BJ (cell line): ENCODE measurements at regions of chr3 and their contacts with region 1.

Region 1: GRCh38 chr3:59641169-59641899 is 591.5 kb upstream of the CFAP20DC start:
- DNase-seq: no peak
- H3K4me3 ChIP-seq: no peak overlapping the region
- H3K27me3 ChIP-seq: 0 out of 2 replicates have a peak, but pooled peaks cover 1% of the 10 kb centered on the region
- CTCF ChIP-seq: no peak

Region 2: GRCh38 chr3:59559721-59560435 is 81.5 kb before region 1 on chr3:
- CTCF ChIA-PET with region 1: no interaction called
- POLR2A ChIA-PET with region 1: no interaction called
- DNase-seq: peak; percentile 70
- H3K4me3 ChIP-seq: no peak overlapping the region
- H3K27me3 ChIP-seq: no peaks in the 10 kb centered on the region
- CTCF ChIP-seq: no peak

Region 3: DNA sequence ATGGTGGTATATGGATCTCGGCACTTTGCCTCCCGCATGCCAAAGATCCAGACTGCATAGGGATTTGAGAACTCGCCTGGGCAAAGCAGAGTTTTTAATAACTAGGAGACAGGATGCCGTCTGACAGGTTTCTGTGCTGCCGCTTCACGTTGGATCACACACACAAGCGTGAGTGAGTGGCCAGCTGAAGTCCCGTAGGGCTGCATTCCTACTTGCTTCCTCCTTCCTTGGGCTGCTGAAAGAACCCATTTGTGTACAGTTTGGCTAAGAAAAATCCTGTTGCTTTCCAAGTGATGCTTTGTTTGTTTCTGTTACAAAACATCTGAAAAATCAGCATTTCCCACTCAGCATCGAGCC is 12.8 kb after region 1 on chr3:
- CTCF ChIA-PET with region 1: interaction called, 5 read pairs
- POLR2A ChIA-PET with region 1: interaction called, 14 read pairs
- DNase-seq: no peak
- H3K4me3 ChIP-seq: no peak overlapping the region
- H3K27me3 ChIP-seq: no peaks in the 10 kb centered on the region
- CTCF ChIP-seq: no peak